HepG2 (cell line): ENCODE measurements at regions of chr11 and their contacts with region 1.

Region 1: DNA sequence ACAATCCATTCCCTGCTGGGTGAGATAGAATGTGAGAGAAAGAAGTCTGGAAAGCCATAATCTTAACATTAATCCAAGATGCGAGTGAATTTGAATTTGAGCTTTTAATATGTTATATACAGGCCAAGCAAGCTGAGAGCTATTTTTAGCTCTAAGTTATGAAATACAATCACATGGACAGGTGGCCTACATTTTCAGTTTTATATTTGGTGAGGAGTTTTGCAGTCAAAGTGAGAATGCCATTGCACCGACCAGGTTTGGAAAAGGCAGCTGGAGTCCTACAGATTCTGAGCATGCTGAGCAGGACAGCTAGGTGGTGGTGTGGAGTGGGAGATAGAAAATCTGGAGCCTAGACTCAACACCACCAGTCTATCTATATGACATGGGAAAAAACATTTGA is 12.0 kb downstream of the OR5B21 start:
- DNase-seq: no peak
- ATAC-seq: no peak
- H3K4me3 ChIP-seq: no peak overlapping the region
- H3K27ac ChIP-seq: no peak overlapping the region
- H3K4me1 ChIP-seq: no peaks in the 10 kb centered on the region
- H3K27me3 ChIP-seq: peaks cover 0 to 7% of the 10 kb centered on the region in 2 experiments; a peak in 2 of 5 replicates
- CTCF ChIP-seq: no peak
- EP300 ChIP-seq: no peak
- POLR2A ChIP-seq: no peak
- RAD21 ChIP-seq: no peak

Region 2: DNA sequence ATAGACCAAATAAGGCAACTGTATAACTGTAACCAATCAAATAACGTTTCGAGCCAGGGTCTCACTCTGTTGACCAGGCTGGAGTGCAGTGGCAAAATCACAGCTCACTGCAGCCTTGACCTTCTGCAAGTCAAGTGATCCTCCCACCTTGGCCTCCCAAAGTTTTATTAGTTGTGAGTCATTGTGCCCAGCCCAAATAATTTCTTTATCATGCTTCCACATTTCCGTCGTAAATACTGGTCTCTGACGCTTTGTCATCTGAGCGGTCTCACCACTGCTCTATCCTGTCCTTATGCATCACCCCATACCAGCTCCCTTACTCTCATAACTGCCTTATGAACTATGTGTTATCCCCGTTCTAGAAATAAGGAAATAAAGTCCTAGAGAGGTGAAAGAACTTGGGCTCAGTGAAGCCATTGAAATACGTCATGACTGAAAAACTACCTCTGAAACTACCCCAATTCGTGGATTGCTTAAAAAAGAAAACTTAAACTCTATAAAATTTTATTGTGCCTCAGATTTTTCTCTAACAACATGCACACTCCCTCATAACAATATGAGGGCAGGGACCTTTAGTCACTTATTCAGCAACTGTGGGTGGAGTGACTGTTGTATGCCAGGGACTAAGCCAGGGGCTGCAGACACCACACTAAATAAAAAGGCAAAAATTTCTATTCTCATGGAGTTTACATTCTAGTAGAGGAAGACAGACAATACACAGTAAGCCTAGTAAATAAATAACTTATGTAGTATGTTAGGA is 1051.4 kb before region 1 on chr11:
- CTCF ChIA-PET with region 1: no interaction called
- POLR2A ChIA-PET with region 1: no interaction called
- in situ Hi-C with region 1: no loop called
- intact Hi-C with region 1: no loop called
- DNase-seq: no peak
- ATAC-seq: no peak
- H3K4me3 ChIP-seq: no peak overlapping the region
- H3K27ac ChIP-seq: no peak overlapping the region
- H3K4me1 ChIP-seq: peaks cover 55% of the 10 kb centered on the region
- H3K27me3 ChIP-seq: no peaks in the 10 kb centered on the region
- CTCF ChIP-seq: no peak
- EP300 ChIP-seq: no peak
- POLR2A ChIP-seq: no peak
- RAD21 ChIP-seq: no peak

Region 3: DNA sequence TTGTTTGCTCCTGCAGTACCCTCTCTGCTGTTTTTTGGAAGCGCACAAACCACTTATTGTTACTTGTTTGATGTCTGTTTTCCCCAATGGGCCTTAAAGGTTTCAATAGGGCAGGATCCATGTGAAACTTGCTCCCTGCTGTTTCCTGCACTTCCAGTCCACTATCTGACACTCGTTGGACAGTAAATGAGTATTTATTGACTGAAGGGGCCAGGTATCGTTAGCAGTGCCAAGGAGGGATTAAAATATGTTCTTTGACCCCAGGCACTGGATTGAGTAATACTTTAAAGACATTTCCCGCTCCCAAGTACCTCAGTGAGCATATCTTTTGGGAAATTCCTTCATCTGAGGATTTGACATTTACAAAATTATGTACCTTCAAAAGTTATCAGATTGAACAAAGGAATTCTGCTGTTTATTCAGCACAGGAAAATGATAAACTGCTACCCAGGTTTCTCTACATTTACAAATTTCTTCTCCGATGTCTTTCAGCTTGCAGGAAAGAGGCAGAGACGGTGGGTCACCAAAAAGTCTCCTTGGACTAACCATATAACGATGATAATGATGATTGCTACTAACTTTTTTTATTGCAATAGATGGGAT is 330.3 kb before region 1 on chr11:
- CTCF ChIA-PET with region 1: no interaction called
- POLR2A ChIA-PET with region 1: no interaction called
- in situ Hi-C with region 1: loop called (anchors 25 kb)
- intact Hi-C with region 1: no loop called
- DNase-seq: peak; percentile 93
- ATAC-seq: peak; percentile 98
- H3K4me3 ChIP-seq: peak overlapping the region in 1 of 3 experiments; percentile 9; a peak in 2 of 6 replicates
- H3K27ac ChIP-seq: peak overlapping the region; percentile 73
- H3K4me1 ChIP-seq: peaks cover 51% of the 10 kb centered on the region
- H3K27me3 ChIP-seq: no peaks in the 10 kb centered on the region
- CTCF ChIP-seq: no peak
- EP300 ChIP-seq: peak in 1 of 2 experiments; percentile 97; a peak in 2 of 4 replicates
- POLR2A ChIP-seq: no peak
- RAD21 ChIP-seq: no peak